GM10248 (cell line): ENCODE measurements at regions of chr2 and their contacts with region 1.

Region 1: GRCh38 chr2:177281400-177282180 is 17.1 kb upstream of the NFE2L2 start:
- DNase-seq: peak; percentile 21
- CTCF ChIP-seq: no peak

Region 2: DNA sequence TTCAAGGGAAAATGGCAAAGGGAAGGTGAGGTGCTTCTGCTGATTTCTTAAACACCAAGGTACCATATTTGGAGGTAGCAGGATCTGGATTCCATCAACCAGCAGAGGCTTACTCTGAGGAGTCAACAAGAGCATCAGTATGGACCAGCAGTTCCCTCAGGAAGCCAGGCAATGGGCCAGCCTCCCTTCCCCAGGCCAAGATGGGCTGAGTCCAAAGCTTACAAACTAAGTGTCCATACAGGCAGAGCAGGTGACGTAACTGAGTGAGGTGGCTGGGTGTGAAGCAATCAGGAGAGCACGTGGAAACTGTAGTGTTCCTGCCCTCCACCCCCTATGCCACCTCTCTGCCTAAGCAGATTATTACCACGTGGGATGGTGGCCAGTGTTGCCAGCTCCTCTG is 203.2 kb before region 1 on chr2:
- CTCF ChIA-PET with region 1: no interaction called
- POLR2A ChIA-PET with region 1: no interaction called
- DNase-seq: no peak
- CTCF ChIP-seq: no peak

Region 3: GRCh38 chr2:177138823-177139222 is 142.8 kb before region 1 on chr2:
- CTCF ChIA-PET with region 1: no interaction called
- POLR2A ChIA-PET with region 1: no interaction called
- DNase-seq: no peak
- CTCF ChIP-seq: no peak

Region 4: DNA sequence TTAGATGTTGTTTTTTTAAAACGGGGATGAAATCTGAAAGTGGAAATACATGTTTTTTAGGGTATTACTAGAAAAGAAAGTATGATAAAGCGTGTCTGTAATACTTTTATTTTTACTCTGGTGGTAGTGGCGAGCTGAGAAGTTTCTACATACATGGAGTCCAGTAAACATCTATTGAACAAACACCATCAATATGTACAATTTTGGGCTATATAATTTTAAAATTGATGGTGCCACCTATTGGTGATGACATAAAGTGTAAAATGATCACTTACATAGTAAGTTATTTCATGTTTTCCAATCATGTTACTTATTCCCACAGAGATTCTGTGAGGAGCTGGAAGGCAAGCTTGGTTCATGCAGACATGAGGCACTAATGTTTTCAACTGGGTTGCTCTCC is 14.4 kb after region 1 on chr2:
- CTCF ChIA-PET with region 1: interaction called, 23 read pairs
- POLR2A ChIA-PET with region 1: no interaction called
- DNase-seq: peak; percentile 54
- CTCF ChIP-seq: no peak